Activated T-helper 2 cell treated with anti-CD3 and anti-CD28 coated beads, Interferon-gamma antibody, Interleukin-2, Interleukin-4, amounts not matched to agents 10 μg/mL and 5 μg/mL and 100 μg/mL, durations not matched to agents 14 hours and 24 hours and 36 hours (primary cell): ENCODE measurements at regions of chr17 and their contacts with region 1.

Region 1: GRCh38 chr17:77066165-77066564 is 74.6 kb upstream of the SEC14L1 start:
- DNase-seq: no peak
- H3K4me3 Mint-ChIP-seq: no peak overlapping the region
- H3K27ac Mint-ChIP-seq: no peak overlapping the region
- H3K4me1 Mint-ChIP-seq: no peaks in the 10 kb centered on the region
- H3K27me3 Mint-ChIP-seq: peaks cover 12% of the 10 kb centered on the region

Region 2: DNA sequence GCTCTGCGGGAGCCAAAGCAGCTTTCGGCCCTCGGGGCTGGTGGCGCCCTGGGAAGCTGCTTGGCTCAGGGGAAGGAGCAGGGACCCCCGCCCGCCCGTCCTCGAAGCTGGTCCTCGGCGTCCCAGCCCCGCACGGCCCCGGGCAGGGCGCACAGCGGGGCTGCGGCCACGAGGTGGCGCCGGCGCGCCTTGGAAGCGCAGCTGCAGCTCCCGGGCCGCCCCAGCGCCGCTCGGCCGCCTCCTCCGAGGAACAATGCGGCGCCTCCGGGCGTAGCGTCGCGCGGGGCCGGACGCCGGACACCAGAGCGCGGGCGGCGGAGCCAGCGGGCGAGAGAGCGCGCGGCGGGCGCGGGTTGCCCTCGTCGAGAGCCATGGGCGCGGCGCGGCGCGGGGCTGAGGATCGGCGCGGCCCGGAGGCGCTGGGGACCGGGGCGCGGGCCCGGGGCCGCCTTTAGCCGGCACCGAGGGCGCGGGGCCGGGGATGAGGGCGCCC is 197.9 kb before region 1 on chr17 and contains the start of gene MGAT5B:
- intact Hi-C with region 1: loop called (anchors 2 kb)
- DNase-seq: peak; percentile 68
- H3K4me3 Mint-ChIP-seq: peak within 1 kb of the TSS; percentile 77
- H3K27ac Mint-ChIP-seq: no peak within 1 kb of the TSS
- H3K4me1 Mint-ChIP-seq: peaks cover 5% of the 10 kb centered on the region
- H3K27me3 Mint-ChIP-seq: peaks cover 35% of the 10 kb centered on the region
- total RNA-seq, gene MGAT5B: 0.55 TPM in 2 replicates

Region 3: GRCh38 chr17:77049440-77049839 is 16.7 kb before region 1 on chr17:
- intact Hi-C with region 1: no loop called
- DNase-seq: no peak
- H3K4me3 Mint-ChIP-seq: no peak overlapping the region
- H3K27ac Mint-ChIP-seq: no peak overlapping the region
- H3K4me1 Mint-ChIP-seq: no peaks in the 10 kb centered on the region
- H3K27me3 Mint-ChIP-seq: peaks cover 2% of the 10 kb centered on the region